Calu3 (cell line): ENCODE measurements at regions of chr5 and their contacts with region 1.

Region 1: DNA sequence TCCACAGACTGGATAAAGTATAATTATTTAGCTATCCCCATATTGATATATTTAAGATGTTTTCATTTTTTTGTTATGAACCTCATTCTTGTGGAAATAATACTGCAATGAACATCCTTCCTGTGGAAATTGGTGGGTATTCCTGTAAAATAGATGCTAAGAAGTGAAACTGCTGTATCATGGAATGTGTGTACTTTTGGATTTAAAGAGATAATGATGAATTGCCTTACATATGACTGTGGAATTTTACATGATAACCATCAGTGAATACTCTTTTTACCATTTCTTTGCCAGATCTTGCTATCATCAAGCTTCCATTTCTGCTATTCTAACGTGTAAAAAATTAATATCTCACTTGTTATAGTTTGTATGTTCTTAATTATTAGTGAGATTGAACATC is 847.9 kb downstream of the EFNA5 start:
- DNase-seq: no peak
- H3K4me3 Mint-ChIP-seq: no peak overlapping the region
- H3K27ac Mint-ChIP-seq: no peak overlapping the region
- H3K4me1 Mint-ChIP-seq: no peaks in the 10 kb centered on the region
- H3K27me3 Mint-ChIP-seq: no peaks in the 10 kb centered on the region
- CTCF ChIP-seq: no peak

Region 2: DNA sequence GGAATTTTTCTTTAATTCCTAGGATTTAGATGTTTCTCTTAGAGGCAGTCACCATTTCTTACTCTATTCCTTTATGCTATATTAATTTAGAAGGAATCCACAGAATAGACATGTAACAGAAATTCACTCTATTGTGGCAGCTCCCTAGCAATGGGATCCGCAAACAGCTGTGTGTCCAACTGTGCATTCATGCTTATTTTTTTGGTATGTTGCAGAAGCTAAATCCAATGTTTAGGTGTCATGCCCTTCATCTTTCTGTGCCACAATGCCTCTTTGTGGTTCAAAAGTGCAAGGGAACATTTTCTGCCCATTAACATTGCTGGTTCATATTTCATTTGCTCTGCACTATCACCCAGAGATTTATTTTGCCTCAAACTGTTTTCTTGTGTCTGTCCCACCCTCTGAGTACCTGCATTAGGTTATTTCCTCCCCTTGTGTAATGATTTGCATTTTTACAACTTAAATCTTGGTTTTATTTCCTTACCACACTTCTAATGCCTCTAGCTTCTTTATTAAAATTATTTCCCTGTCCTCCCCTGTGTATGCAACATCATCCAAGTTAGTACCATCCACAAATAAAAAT is 31.3 kb after region 1 on chr5:
- CTCF ChIA-PET with region 1: interaction called, 4 read pairs
- intact Hi-C with region 1: loop called (anchors 1 kb)
- DNase-seq: no peak
- H3K4me3 Mint-ChIP-seq: no peak overlapping the region
- H3K27ac Mint-ChIP-seq: no peak overlapping the region
- H3K4me1 Mint-ChIP-seq: peaks cover 26% of the 10 kb centered on the region
- H3K27me3 Mint-ChIP-seq: no peaks in the 10 kb centered on the region
- CTCF ChIP-seq: no peak